Esophagus muscularis mucosa (tissue), 4 donors: ENCODE measurements at regions of chr1 and their contacts with region 1.

Region 1: DNA sequence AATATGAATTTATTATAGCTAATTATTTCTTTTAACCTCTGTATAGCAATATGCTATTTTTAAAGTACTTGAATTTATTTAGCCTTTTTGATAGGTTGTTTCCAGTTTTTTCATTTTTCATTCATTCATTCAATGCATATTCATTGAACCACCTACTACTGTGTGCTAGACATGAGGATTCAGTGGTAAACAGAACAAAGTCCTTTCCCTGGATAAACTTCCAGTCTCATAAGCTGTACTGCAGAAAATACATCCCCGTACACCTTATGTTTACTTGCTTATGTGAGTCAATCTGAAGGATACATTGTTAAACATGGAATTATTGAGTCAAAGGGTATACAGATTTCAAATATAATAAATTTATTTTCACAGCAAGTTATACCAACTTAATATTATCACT is 21.9 kb downstream of the AGL start:
- DNase-seq: no peak
- H3K4me3 ChIP-seq: no peak overlapping the region
- H3K27ac ChIP-seq: no peak overlapping the region
- H3K4me1 ChIP-seq: peaks cover 0 to 47% (median 16%) of the 10 kb centered on the region in 4 donors
- H3K27me3 ChIP-seq: no peaks in the 10 kb centered on the region
- CTCF ChIP-seq: no peak
- EP300 ChIP-seq: no peak
- POLR2A ChIP-seq: no peak

Region 2: DNA sequence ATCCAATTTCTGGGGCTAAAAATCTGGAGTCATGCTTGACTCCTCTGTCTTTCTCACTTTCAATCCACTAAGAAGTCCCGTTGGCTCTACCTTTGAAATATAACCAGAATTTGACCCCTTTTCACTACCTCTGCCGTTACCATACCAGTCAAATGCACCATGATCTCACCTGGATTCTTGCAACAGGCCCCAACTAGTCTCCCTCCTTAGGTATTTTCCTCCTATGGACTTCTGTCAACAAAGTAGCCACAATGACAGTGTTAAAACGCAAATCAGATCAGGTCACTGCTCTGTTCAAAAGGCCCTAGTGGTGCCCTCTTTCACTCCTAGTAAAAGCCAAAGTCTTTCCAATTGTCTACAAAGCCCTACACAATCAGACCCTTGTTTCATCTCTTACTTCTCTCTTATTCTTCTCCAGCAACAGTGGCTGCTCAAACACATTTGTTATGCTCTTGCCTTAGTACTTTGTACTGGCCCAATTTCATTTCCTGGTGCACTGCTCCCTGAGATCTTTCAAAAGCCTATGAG is 57.6 kb before region 1 on chr1:
- intact Hi-C with region 1: loop called (anchors 5 kb)
- DNase-seq: no peak
- H3K4me3 ChIP-seq: no peak overlapping the region
- H3K27ac ChIP-seq: no peak overlapping the region
- H3K4me1 ChIP-seq: peaks cover 0 to under 1% (median 0%) of the 10 kb centered on the region in 4 donors
- H3K27me3 ChIP-seq: no peaks in the 10 kb centered on the region
- CTCF ChIP-seq: no peak
- EP300 ChIP-seq: no peak
- POLR2A ChIP-seq: no peak